ENCODE measurements at regions of chr11 and their contacts with region 1.

Region 1: GRCh38 chr11:44083906-44084305 is 11.6 kb upstream of the EXT2 start:
- DNase-seq: no peak
- ATAC-seq: no peak
- H3K4me3 Mint-ChIP-seq: no peak overlapping the region
- H3K27ac Mint-ChIP-seq: no peak overlapping the region
- H3K4me1 Mint-ChIP-seq: peaks cover 2% of the 10 kb centered on the region
- H3K27me3 Mint-ChIP-seq: no peaks in the 10 kb centered on the region
- CTCF ChIP-seq: no peak

Region 2: GRCh38 chr11:44104481-44105294 is 20.8 kb after region 1 on chr11:
- CTCF ChIA-PET with region 1: interaction called, 16 read pairs
- POLR2A ChIA-PET with region 1: no interaction called
- intact Hi-C with region 1: no loop called
- DNase-seq: no peak
- ATAC-seq: peak; percentile 71
- H3K4me3 Mint-ChIP-seq: no peak overlapping the region
- H3K27ac Mint-ChIP-seq: no peak overlapping the region
- H3K4me1 Mint-ChIP-seq: peaks cover 23% of the 10 kb centered on the region
- H3K27me3 Mint-ChIP-seq: no peaks in the 10 kb centered on the region
- CTCF ChIP-seq: no peak